MCF 10A (cell line): ENCODE measurements at regions of chr1 and their contacts with region 1.

Region 1: GRCh38 chr1:35451125-35451528 is 106.1 kb downstream of the KIAA0319L start:
- DNase-seq: peak; percentile 82
- H3K4me3 Mint-ChIP-seq: peak overlapping the region; percentile 0
- H3K27ac Mint-ChIP-seq: no peak overlapping the region
- H3K4me1 Mint-ChIP-seq: peaks cover 19% of the 10 kb centered on the region
- H3K27me3 Mint-ChIP-seq: no peaks in the 10 kb centered on the region
- CTCF ChIP-seq: peak; percentile 83

Region 2: DNA sequence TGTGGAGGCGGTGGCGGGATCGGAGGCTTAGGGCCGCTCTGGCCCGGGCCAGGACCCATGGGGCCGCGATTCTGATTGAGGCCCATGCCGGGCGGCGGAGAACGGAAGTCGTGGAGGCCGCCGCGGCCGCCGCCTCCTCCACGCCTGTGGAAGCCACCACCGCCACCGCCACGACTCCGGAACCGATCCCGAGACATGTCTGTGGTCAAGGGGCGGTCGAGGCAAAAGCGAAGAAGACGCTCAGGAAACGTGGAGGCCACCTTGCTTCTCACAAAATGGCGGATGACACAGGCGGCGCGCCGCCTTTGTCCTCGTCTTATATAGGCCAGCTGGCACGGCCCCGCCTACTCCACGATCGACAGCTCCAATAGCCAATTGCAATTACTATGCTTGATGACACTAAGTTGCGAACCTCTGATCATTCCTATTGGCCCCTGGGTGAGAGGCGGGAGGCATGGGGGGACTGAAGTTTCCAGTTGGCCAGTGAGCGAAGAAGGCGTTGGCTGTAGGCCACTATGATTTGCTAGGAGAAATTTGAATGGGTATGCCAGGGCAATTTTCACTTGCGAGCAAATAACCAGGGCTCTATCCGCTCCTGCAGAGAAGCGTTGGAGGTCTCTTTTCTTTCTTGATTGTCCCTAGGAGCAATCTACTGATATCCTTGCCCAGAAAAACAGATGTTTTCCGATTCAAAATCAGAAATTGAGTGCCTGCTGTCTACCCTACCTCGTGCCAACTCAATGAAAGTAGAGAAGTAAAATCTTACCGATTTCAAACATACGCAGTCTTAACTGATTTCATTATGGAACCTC is 258.1 kb before region 1 on chr1 and contains the start of gene SFPQ:
- CTCF ChIA-PET with region 1: interaction called, 3 read pairs
- POLR2A ChIA-PET with region 1: interaction called, 4 read pairs
- intact Hi-C with region 1: loop called (anchors 5 kb)
- DNase-seq: peak; percentile 99
- H3K4me3 Mint-ChIP-seq: peak within 1 kb of the TSS; percentile 85
- H3K27ac Mint-ChIP-seq: peak within 1 kb of the TSS; percentile 96
- H3K4me1 Mint-ChIP-seq: peaks cover 28% of the 10 kb centered on the region
- H3K27me3 Mint-ChIP-seq: no peaks in the 10 kb centered on the region
- CTCF ChIP-seq: no peak
- total RNA-seq, gene SFPQ: 275 and 314 TPM in 2 replicates

Region 3: GRCh38 chr1:35377555-35377954 is 73.6 kb before region 1 on chr1:
- CTCF ChIA-PET with region 1: no interaction called
- POLR2A ChIA-PET with region 1: no interaction called
- intact Hi-C with region 1: no loop called
- DNase-seq: peak; percentile 2
- H3K4me3 Mint-ChIP-seq: no peak overlapping the region
- H3K27ac Mint-ChIP-seq: no peak overlapping the region
- H3K4me1 Mint-ChIP-seq: peaks cover 11% of the 10 kb centered on the region
- H3K27me3 Mint-ChIP-seq: no peaks in the 10 kb centered on the region
- CTCF ChIP-seq: no peak

Region 4: DNA sequence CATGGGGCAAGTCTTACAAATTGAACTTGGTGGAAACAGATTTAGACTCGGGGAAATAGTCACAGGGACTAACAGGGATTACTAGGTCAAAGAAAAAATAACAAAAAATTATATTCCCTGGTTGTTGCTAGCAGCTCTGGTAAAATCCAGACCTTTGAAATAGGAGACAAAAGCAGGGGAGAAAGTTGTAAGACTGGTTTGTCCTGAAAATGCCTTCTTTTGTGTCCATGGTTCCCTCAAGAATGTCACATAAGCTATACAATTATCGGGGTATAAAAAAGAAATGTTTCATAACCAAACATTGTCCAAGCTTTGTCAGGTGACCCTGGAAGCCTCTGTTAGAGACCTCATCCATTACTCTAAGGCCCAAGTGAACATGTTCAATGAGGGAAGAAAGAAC is 73.0 kb after region 1 on chr1:
- CTCF ChIA-PET with region 1: no interaction called
- POLR2A ChIA-PET with region 1: no interaction called
- intact Hi-C with region 1: no loop called
- DNase-seq: no peak
- H3K4me3 Mint-ChIP-seq: no peak overlapping the region
- H3K27ac Mint-ChIP-seq: no peak overlapping the region
- H3K4me1 Mint-ChIP-seq: no peaks in the 10 kb centered on the region
- H3K27me3 Mint-ChIP-seq: no peaks in the 10 kb centered on the region
- CTCF ChIP-seq: no peak

Region 5: GRCh38 chr1:35536556-35537162 is 85.5 kb after region 1 on chr1:
- CTCF ChIA-PET with region 1: interaction called, 21 read pairs
- POLR2A ChIA-PET with region 1: no interaction called
- intact Hi-C with region 1: no loop called
- DNase-seq: no peak
- H3K4me3 Mint-ChIP-seq: no peak overlapping the region
- H3K27ac Mint-ChIP-seq: no peak overlapping the region
- H3K4me1 Mint-ChIP-seq: peaks cover 18% of the 10 kb centered on the region
- H3K27me3 Mint-ChIP-seq: no peaks in the 10 kb centered on the region
- CTCF ChIP-seq: no peak

Region 6: GRCh38 chr1:35557292-35558063 is 106.4 kb after region 1 on chr1 and contains the starts of genes KIAA0319L and NCDN:
- CTCF ChIA-PET with region 1: interaction called, 53 read pairs
- POLR2A ChIA-PET with region 1: interaction called, 212 read pairs
- intact Hi-C with region 1: loop called (anchors 2 kb)
- DNase-seq: peak; percentile 97
- H3K4me3 Mint-ChIP-seq: peak within 1 kb of the TSS; percentile 94
- H3K27ac Mint-ChIP-seq: peak within 1 kb of the TSS; percentile 93
- H3K4me1 Mint-ChIP-seq: peaks cover 50% of the 10 kb centered on the region
- H3K27me3 Mint-ChIP-seq: no peaks in the 10 kb centered on the region
- CTCF ChIP-seq: no peak
- total RNA-seq, gene KIAA0319L: 50.7 and 56.8 TPM in 2 replicates
- total RNA-seq, gene NCDN: 31.4 and 31.5 TPM in 2 replicates

Region 7: GRCh38 chr1:35641233-35641866 is 190.2 kb after region 1 on chr1 and contains the start of gene PSMB2:
- CTCF ChIA-PET with region 1: interaction called, 5 read pairs
- POLR2A ChIA-PET with region 1: interaction called, 4 read pairs
- intact Hi-C with region 1: loop called (anchors 5 kb)
- DNase-seq: peak; percentile 96
- H3K4me3 Mint-ChIP-seq: peak within 1 kb of the TSS; percentile 99
- H3K27ac Mint-ChIP-seq: peak within 1 kb of the TSS; percentile 100
- H3K4me1 Mint-ChIP-seq: peaks cover 7% of the 10 kb centered on the region
- H3K27me3 Mint-ChIP-seq: peaks cover 12% of the 10 kb centered on the region
- CTCF ChIP-seq: no peak
- total RNA-seq, gene PSMB2: 82.6 and 93.9 TPM in 2 replicates

Region 8: DNA sequence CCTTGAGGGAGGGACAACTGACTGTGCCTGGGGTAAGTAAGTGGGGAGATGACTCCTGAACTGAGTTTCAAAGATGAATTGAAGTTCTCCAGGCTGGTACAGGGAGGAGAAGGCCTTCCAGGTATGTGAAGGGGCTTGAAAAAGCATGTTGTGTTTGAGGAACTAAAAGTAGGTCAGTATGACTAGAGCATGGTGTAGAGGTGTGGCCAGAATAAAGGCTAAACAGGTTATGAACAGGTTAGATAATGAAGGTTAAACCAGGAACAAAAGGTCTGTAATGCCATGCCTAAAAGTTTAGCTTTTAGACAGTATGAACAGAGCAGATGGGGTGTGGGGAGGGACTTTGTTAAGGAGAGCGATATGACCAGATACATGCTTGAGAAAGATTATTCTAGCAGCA is 326.0 kb after region 1 on chr1:
- CTCF ChIA-PET with region 1: interaction called, 5 read pairs
- POLR2A ChIA-PET with region 1: no interaction called
- intact Hi-C with region 1: loop called (anchors 2 kb)
- DNase-seq: no peak
- H3K4me3 Mint-ChIP-seq: no peak overlapping the region
- H3K27ac Mint-ChIP-seq: no peak overlapping the region
- H3K4me1 Mint-ChIP-seq: no peaks in the 10 kb centered on the region
- H3K27me3 Mint-ChIP-seq: no peaks in the 10 kb centered on the region
- CTCF ChIP-seq: no peak